ENCODE measurements at regions of chr19 and their contacts with region 1.

Region 1: GRCh38 chr19:42353341-42354015 is 28.0 kb downstream of the MEGF8 start:
- DNase-seq: no peak
- ATAC-seq: no peak
- H3K4me3 ChIP-seq: no peak overlapping the region
- H3K27ac ChIP-seq: no peak overlapping the region
- H3K4me1 ChIP-seq: no peaks in the 10 kb centered on the region
- CTCF ChIP-seq: no peak
- EP300 ChIP-seq: no peak
- POLR2A ChIP-seq: no peak; the same call in 1 of the 2 replicates
- RAD21 ChIP-seq: no peak

Region 2: DNA sequence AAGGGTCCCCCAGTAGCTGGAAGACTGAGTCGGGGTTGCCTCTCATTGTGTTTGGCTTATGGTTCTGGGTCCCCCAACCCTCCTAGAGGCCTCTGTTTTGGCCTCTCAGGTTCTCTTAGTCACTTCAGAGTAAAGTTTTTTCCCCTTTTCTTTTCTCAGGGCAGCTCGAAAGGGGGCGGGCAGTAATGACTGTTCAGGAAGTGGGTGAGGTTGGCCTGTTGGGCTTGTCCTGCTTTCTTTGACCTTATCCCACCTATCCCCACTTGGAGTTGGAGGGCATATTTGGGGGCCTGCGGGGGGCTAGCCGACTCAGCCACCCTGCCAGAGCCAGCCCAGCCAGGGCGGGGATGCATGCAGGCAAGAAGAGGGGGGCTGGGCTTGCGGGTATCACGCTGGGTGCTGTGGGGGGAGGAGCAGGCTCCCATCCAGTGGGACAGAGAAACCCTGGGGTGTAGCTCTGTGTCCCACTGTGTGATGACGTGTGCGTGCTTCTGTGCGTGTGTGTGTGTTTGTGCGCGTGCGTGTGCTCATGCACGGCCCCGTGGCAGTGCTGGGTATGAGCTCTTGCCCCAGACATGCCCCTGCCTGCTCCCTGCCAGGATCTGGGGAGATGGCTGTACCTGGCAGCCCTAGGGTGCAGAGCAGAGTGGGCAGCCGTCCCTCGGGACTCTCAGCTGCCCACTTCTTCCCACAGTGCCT is 83.0 kb before region 1 on chr19:
- CTCF ChIA-PET with region 1: no interaction called
- POLR2A ChIA-PET with region 1: no interaction called
- DNase-seq: peak in 1 of 2 experiments; percentile 83
- ATAC-seq: no peak
- H3K4me3 ChIP-seq: peak overlapping the region; percentile 58
- H3K27ac ChIP-seq: peak overlapping the region; percentile 87 to 94
- H3K4me1 ChIP-seq: peaks cover 28% of the 10 kb centered on the region
- CTCF ChIP-seq: no peak
- EP300 ChIP-seq: no peak
- POLR2A ChIP-seq: peak; percentile 60
- RAD21 ChIP-seq: no peak

Region 3: DNA sequence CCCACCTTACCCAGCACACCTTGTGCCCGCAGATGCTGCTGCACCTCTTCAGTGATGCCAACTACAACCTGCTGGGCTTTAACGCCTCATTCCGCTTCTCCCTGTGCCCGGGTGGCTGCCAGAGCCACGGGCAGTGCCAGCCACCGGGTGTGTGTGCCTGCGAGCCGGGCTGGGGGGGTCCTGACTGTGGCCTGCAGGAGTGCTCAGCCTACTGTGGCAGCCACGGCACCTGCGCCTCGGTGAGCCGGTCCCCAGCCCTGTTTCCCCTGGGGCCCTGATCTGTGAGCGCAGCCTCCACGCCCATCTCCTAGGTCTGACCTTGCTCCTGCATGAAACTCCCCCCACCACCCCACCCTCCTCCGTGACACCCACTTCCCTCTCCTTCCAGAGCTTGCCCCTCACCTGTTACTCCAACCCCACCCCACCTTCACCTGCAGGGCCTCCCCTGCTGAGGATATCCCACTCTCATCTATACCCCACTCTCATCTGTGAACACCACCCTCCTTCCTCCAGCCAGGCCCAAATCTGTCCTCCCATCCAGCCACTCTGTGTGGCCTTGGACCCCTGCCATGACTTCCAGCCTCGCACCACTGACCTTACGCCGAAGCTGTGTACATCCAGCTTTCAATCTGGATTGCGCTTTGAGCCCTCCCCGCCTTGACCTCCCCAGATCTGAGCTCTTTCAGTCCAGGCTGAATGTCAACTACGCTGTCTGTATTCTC is 19.3 kb before region 1 on chr19:
- CTCF ChIA-PET with region 1: interaction called, 10 read pairs
- POLR2A ChIA-PET with region 1: no interaction called
- DNase-seq: no peak
- ATAC-seq: peak in 1 of 2 experiments; percentile 3; a peak in 1 of 6 replicates
- H3K4me3 ChIP-seq: no peak overlapping the region
- H3K27ac ChIP-seq: no peak overlapping the region
- H3K4me1 ChIP-seq: no peaks in the 10 kb centered on the region
- CTCF ChIP-seq: no peak
- EP300 ChIP-seq: no peak
- POLR2A ChIP-seq: no peak
- RAD21 ChIP-seq: no peak

Measured in A549 (cell line).